BJ (cell line): ENCODE measurements at regions of chr16 and their contacts with region 1.

Region 1: DNA sequence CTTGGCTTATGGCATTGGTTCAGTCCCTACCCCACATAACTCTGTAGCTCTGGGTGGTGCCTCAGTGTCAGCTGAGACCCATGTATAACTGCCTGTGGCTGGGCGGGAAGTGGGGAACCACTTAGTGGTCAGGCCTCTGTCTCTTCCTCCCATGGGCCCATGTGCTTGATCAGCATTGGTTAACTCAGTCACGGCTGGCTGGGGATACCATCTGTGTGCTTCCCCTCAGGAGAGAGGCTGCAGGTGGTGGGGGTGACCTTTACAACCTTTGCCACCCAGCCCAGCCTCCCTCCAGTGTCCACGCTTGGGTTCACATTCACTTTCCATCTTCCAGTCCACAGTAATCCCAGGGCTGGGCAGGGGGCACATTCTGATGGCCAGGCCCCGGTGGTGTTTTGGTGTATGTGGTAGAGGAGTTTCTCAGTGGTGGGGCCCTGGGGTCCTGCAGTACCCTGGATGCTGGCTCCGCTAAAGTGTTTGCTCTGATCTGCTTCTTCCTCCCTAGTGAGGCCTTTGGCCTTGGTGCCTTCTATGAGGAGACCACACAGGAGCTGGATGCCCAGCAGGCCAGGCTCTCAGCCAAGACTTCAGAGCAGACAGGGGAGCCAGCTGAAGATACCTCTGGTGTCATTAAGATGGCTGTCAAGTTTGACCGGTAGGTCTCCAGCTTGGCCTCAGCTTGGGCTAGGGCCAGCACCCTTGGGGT is 10.2 kb upstream of the NFATC3 start:
- DNase-seq: no peak
- H3K4me3 ChIP-seq: no peak overlapping the region
- H3K27me3 ChIP-seq: no peaks in the 10 kb centered on the region
- CTCF ChIP-seq: no peak

Region 2: GRCh38 chr16:68064791-68065365 is 10.1 kb before region 1 on chr16:
- CTCF ChIA-PET with region 1: interaction called, 22 read pairs
- POLR2A ChIA-PET with region 1: no interaction called
- DNase-seq: no peak
- H3K4me3 ChIP-seq: no peak overlapping the region
- H3K27me3 ChIP-seq: no peaks in the 10 kb centered on the region
- CTCF ChIP-seq: peak; percentile 92

Region 3: DNA sequence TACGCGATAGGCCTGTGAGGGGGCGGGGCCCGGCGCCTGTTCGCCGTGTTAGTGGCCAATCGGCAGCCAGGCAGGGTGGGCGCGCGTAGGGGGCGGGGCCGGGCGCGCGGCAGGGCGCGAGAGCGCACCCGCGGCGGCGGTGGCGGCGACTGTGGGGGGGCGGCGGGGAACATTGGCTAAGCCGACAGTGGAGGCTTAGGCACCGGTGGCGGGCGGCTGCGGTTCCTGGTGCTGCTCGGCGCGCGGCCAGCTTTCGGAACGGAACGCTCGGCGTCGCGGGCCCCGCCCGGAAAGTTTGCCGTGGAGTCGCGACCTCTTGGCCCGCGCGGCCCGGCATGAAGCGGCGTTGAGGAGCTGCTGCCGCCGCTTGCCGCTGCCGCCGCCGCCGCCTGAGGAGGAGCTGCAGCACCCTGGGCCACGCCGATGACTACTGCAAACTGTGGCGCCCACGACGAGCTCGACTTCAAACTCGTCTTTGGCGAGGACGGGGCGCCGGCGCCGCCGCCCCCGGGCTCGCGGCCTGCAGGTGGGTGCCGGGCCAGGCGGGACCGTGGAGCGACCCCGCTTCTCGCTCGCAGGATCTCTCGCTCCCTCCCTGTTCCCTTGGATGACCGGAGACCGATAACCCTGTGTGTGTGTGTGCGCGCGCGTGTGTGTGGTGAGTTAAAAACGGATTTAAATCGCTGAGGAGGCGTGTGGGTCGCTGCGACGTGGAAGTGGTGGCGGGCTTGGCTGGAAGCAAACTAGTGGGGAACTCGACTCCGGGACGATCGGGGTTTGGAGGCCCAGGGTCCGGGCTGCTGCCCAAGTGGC is 10.5 kb after region 1 on chr16 and contains the start of gene NFATC3:
- CTCF ChIA-PET with region 1: interaction called, 10 read pairs
- POLR2A ChIA-PET with region 1: no interaction called
- DNase-seq: peak; percentile 61
- H3K4me3 ChIP-seq: peak within 1 kb of the TSS; percentile 81
- H3K27me3 ChIP-seq: no peaks in the 10 kb centered on the region
- CTCF ChIP-seq: no peak
- polyA plus RNA-seq, gene NFATC3: 10.5 and 14.9 TPM in 2 replicates